MCF 10A (cell line): ENCODE measurements at regions of chr21 and their contacts with region 1.

Region 1: GRCh38 chr21:28943631-28944030 is 49.0 kb downstream of the LTN1 start:
- DNase-seq: no peak
- H3K4me3 Mint-ChIP-seq: no peak overlapping the region
- H3K27ac Mint-ChIP-seq: no peak overlapping the region
- H3K4me1 Mint-ChIP-seq: peaks cover 10% of the 10 kb centered on the region
- H3K27me3 Mint-ChIP-seq: no peaks in the 10 kb centered on the region
- CTCF ChIP-seq: no peak

Region 2: GRCh38 chr21:28516991-28517592 is 426.5 kb before region 1 on chr21:
- CTCF ChIA-PET with region 1: no interaction called
- POLR2A ChIA-PET with region 1: no interaction called
- intact Hi-C with region 1: loop called (anchors 2 kb)
- DNase-seq: peak; percentile 78
- H3K4me3 Mint-ChIP-seq: no peak overlapping the region
- H3K27ac Mint-ChIP-seq: no peak overlapping the region
- H3K4me1 Mint-ChIP-seq: peaks cover 5% of the 10 kb centered on the region
- H3K27me3 Mint-ChIP-seq: no peaks in the 10 kb centered on the region
- CTCF ChIP-seq: peak; percentile 73

Region 3: DNA sequence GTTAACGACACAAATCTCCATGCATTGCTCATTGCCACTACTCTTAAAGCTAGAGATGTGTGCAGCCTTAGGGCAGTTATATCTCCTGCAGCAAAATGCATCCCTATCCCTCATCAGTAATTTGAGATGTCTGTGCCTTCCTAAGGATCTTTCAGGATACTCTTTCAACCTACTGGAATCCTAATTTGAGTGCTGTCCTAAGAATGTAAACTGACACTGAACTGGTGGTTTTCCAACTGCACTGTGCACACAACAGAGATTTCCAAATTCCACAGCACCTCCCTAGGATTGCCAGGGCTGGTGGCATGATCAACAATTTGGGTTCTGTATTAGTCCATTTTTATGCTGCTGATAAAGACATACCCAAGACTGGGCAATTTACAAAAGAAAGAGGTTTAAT is 144.8 kb before region 1 on chr21:
- CTCF ChIA-PET with region 1: no interaction called
- POLR2A ChIA-PET with region 1: no interaction called
- intact Hi-C with region 1: loop called (anchors 5 kb)
- DNase-seq: peak; percentile 17
- H3K4me3 Mint-ChIP-seq: no peak overlapping the region
- H3K27ac Mint-ChIP-seq: no peak overlapping the region
- H3K4me1 Mint-ChIP-seq: no peaks in the 10 kb centered on the region
- H3K27me3 Mint-ChIP-seq: no peaks in the 10 kb centered on the region
- CTCF ChIP-seq: no peak

Region 4: GRCh38 chr21:28884976-28885852 is 58.4 kb before region 1 on chr21:
- CTCF ChIA-PET with region 1: no interaction called
- POLR2A ChIA-PET with region 1: interaction called, 3 read pairs
- intact Hi-C with region 1: loop called (anchors 2 kb)
- DNase-seq: peak; percentile 90
- H3K4me3 Mint-ChIP-seq: peak overlapping the region; percentile 97
- H3K27ac Mint-ChIP-seq: peak overlapping the region; percentile 99
- H3K4me1 Mint-ChIP-seq: peaks cover 8% of the 10 kb centered on the region
- H3K27me3 Mint-ChIP-seq: peaks cover 32% of the 10 kb centered on the region
- CTCF ChIP-seq: no peak